ENCODE measurements at regions of chr1 and their contacts with region 1.

Region 1: DNA sequence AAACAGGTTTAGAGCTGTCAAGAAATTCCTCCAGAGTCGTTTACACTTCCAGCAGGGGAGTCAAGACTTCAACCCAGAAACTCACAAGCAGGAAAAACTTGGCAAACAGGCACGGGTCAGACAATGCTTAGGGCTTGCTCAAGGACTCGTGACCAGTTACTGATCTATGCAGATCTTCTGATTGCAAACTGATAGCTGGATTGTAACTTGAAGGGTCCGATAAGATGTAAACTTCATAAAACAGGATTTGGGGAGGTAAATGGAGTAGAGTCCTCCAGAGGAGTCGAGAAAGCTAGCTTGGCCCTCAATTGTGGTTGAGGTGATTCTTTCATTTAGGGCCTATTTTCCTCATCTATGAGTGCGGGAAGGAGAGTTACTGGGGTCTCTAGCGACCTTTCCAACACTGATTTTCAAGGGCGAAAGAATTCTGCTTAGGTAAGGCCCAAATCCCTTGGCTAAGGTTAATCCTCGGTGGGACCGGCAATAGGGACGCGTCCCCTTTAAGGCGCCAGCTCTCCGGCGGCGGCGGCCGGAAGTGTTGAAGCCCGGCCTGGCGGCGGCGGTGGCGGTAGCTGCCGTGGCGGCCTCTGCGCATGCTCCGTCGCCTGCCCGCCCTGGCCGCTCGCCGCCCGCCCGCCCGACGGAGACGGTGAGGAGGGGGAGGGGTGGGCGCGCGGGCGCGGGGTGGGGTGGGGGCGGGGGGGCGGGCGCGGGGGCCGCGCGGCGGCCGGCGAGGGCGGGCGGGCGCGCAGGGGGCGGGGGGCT is at the start of gene GMEB1:
- DNase-seq: peak; percentile 89
- H3K4me3 Mint-ChIP-seq: peak within 1 kb of the TSS; percentile 92
- H3K27ac Mint-ChIP-seq: peak within 1 kb of the TSS; percentile 97
- H3K4me1 Mint-ChIP-seq: peaks cover 20% of the 10 kb centered on the region
- H3K27me3 Mint-ChIP-seq: no peaks in the 10 kb centered on the region
- total RNA-seq, gene GMEB1: 27.7 to 28.7 TPM

Region 2: DNA sequence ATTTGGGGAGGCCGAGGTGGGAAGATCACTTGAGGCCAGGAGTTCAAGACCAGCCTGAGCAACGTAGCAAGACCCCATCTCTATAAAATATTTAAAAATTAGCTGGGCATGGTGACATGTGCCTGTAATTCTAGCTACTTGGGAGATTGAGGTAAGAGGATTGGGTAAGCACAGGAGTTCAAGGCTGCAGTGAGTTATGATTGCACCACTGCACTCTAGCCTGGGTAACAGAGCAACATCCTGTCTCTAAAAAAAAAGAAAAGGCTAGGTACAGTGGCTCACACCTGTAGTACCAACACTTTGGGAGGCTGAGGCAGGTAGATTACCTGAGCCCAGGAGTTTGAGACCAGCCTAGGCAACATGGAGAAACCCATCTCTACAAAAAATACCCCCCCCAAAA is 198.2 kb before region 1 on chr1:
- CTCF ChIA-PET with region 1: no interaction called
- POLR2A ChIA-PET with region 1: no interaction called
- DNase-seq: no peak
- H3K4me3 Mint-ChIP-seq: no peak overlapping the region
- H3K27ac Mint-ChIP-seq: no peak overlapping the region
- H3K4me1 Mint-ChIP-seq: peaks cover 10% of the 10 kb centered on the region
- H3K27me3 Mint-ChIP-seq: no peaks in the 10 kb centered on the region

Region 3: DNA sequence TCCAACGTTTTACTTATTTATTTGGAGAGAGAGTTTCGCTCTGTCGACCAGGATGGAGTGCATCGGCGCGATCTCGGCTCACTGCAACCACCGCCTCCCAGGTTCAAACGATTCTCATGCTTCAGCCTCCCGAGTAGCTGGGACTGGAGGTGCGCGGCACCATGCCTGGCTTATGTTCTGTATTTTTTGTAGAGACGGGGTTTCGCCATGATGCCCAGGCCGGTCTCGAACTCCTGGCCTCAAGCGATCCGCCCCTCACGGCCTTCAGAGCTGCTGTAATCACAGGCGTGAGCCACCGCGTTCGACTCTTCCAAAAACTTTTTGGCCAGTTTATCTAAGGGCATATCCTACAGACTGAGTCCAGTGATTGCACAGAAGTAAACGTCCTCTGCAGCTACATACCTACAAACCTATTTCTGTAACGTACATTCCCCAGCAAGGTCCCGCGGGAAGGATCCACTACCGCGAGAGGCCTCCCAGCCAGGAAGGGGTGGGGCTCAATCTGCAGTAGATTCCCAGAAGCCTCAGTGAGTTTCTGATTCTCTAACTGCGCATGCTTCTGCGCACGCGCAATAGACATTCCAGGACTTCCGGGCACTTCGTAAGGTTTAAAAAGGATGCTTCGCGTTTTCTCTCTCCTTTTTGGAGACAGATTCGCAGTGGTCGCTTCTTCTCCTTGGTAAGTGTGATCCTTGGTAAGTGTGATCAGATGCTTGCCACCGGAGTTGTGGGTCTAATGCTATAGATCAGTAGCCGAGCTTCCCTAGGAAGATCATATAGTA is 162.8 kb before region 1 on chr1 and contains the start of gene RCC1:
- CTCF ChIA-PET with region 1: no interaction called
- POLR2A ChIA-PET with region 1: interaction called, 29 read pairs
- DNase-seq: peak; percentile 97
- H3K4me3 Mint-ChIP-seq: peak within 1 kb of the TSS; percentile 98
- H3K27ac Mint-ChIP-seq: peak within 1 kb of the TSS; percentile 97
- H3K4me1 Mint-ChIP-seq: peaks cover 42% of the 10 kb centered on the region
- H3K27me3 Mint-ChIP-seq: no peaks in the 10 kb centered on the region
- total RNA-seq, gene RCC1: 47.6 to 50.7 TPM

Region 4: GRCh38 chr1:28642847-28643635 is 25.3 kb before region 1 on chr1 and contains the start of gene TAF12:
- CTCF ChIA-PET with region 1: interaction called, 19 read pairs
- POLR2A ChIA-PET with region 1: interaction called, 441 read pairs
- DNase-seq: peak; percentile 95
- H3K4me3 Mint-ChIP-seq: peak within 1 kb of the TSS; percentile 96
- H3K27ac Mint-ChIP-seq: peak within 1 kb of the TSS; percentile 96
- H3K4me1 Mint-ChIP-seq: peaks cover 54% of the 10 kb centered on the region
- H3K27me3 Mint-ChIP-seq: no peaks in the 10 kb centered on the region
- total RNA-seq, gene TAF12: 33.8 to 34.0 TPM

Region 5: DNA sequence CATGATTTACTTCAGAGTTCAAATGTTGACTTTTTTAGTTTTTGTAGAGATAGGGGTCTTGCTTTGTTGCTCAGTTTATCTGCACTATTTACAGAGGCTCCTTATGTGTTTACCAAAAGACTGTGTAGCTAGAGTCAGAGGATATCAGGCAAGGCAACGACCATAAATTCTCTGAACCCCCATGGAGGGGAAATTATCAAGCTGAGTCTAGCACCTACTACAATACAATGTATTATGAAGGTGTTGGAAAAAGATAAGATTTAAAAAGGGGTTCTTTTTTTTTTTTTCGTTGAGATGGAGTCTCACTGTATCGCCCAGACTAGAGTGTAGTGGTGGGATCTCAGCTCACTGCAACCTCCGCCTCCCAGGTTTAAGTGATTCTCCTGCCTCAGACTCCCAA is 16.6 kb after region 1 on chr1:
- CTCF ChIA-PET with region 1: no interaction called
- POLR2A ChIA-PET with region 1: interaction called, 10 read pairs
- DNase-seq: no peak
- H3K4me3 Mint-ChIP-seq: no peak overlapping the region
- H3K27ac Mint-ChIP-seq: no peak overlapping the region
- H3K4me1 Mint-ChIP-seq: peaks cover 4% of the 10 kb centered on the region
- H3K27me3 Mint-ChIP-seq: no peaks in the 10 kb centered on the region

Region 6: DNA sequence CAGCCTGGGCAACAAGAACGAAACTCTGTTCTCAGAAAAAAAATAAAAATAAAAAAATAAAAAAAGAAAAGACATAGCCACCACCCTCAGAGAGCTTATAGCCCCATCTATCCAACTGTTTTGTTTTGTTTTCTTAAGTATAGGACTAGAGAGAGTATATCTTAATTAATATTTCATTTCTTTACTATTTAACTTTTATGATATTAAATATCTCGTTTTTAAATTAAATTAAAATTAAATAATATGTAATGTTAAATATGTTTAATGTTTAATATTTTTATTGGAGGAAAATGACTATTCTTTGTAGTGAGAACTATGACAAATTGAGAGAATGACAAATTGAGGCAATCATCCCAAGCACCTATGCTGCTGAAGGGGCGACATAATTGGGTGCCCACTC is 35.3 kb after region 1 on chr1:
- CTCF ChIA-PET with region 1: no interaction called
- POLR2A ChIA-PET with region 1: interaction called, 17 read pairs
- DNase-seq: no peak
- H3K4me3 Mint-ChIP-seq: no peak overlapping the region
- H3K27ac Mint-ChIP-seq: no peak overlapping the region
- H3K4me1 Mint-ChIP-seq: peaks cover 11% of the 10 kb centered on the region
- H3K27me3 Mint-ChIP-seq: no peaks in the 10 kb centered on the region

Region 7: DNA sequence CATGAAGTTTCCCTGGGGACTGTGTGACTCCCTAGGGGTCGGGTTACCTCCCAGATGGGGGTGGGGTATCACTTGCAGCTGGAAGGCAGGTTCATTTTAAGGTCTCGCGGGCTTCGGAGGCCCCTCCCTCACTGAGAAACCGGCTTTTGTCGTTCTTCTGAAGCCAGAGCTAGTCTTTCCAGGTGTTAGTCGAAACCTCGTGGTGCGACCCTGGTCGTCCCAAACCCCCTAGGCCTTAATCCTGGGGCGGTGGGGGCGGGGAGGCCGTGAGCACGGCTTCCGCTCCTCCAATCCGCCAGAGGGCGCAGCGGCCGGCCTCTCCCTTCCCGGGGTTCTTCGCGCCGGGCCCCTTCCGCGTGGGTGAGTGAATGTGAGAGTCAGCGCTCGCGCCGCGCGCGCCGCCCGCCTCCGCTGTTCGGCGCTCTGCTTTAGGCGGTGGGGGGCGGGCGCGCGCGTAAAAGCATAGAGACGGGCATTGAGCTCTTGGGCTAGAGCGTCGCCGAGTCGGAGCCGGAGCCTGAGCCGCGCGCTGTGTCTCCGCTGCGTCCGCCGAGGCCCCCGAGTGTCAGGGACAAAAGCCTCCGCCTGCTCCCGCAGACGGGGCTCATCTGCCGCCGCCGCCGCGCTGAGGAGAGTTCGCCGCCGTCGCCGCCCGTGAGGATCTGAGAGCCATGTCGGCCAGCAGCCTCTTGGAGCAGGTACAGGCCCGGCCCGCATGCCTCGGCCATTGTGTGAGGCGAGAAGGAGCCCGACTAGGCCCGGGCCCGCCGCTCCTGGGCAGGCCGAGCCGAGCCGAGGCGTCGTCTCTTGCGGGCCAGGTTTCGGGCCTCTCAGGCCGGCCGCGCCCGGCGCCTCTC is 68.3 kb after region 1 on chr1 and contains the start of gene YTHDF2:
- CTCF ChIA-PET with region 1: interaction called, 52 read pairs
- POLR2A ChIA-PET with region 1: interaction called, 101 read pairs
- DNase-seq: peak; percentile 98
- H3K4me3 Mint-ChIP-seq: peak within 1 kb of the TSS; percentile 97
- H3K27ac Mint-ChIP-seq: peak within 1 kb of the TSS; percentile 94
- H3K4me1 Mint-ChIP-seq: peaks cover 38% of the 10 kb centered on the region
- H3K27me3 Mint-ChIP-seq: no peaks in the 10 kb centered on the region
- total RNA-seq, gene YTHDF2: 69.9 to 70.9 TPM

Region 8: DNA sequence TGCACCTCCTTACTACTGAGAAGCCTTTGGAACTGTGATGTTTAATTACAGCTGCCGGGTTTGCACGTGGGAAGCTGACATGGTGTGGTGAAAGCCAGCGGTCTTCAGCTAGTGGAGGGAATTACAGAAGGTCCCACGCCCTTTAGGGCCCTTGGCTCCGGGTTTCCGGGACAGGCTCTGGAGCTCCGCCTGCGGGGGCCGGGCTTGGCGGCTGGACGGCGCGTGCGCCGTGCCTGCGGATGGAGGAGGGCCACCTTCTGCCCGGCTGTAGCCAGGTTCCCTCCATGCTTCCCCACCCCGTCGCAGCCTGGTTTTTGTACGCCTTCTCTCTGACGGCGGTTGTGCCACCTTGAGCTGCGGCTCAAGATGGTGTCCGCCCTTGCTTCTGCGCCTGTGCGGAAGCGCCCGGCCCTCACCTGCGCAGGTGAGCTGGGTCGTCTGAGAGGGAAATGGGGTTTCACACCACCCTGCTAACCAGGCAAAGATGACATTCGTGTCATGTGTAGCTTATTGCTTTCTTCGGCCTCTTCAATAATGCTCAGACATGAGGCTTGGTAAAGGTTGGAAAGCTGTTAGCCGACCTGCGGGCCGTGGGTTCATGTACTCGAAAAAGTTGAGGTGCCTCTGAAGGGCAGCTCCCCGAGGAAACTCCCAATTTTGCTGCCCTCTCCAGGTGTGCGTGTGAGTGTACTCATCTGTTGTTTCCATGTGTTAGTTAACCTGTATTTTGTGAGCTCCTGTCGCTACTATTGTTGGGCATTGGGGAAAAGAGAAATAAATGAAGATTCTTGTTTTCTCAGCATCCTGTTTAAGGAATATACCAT is 107.0 kb after region 1 on chr1:
- CTCF ChIA-PET with region 1: interaction called, 3 read pairs
- POLR2A ChIA-PET with region 1: interaction called, 13 read pairs
- DNase-seq: peak; percentile 71
- H3K4me3 Mint-ChIP-seq: peak overlapping the region; percentile 66
- H3K27ac Mint-ChIP-seq: no peak overlapping the region
- H3K4me1 Mint-ChIP-seq: peaks cover 10% of the 10 kb centered on the region
- H3K27me3 Mint-ChIP-seq: peaks cover 6% of the 10 kb centered on the region

Region 9: DNA sequence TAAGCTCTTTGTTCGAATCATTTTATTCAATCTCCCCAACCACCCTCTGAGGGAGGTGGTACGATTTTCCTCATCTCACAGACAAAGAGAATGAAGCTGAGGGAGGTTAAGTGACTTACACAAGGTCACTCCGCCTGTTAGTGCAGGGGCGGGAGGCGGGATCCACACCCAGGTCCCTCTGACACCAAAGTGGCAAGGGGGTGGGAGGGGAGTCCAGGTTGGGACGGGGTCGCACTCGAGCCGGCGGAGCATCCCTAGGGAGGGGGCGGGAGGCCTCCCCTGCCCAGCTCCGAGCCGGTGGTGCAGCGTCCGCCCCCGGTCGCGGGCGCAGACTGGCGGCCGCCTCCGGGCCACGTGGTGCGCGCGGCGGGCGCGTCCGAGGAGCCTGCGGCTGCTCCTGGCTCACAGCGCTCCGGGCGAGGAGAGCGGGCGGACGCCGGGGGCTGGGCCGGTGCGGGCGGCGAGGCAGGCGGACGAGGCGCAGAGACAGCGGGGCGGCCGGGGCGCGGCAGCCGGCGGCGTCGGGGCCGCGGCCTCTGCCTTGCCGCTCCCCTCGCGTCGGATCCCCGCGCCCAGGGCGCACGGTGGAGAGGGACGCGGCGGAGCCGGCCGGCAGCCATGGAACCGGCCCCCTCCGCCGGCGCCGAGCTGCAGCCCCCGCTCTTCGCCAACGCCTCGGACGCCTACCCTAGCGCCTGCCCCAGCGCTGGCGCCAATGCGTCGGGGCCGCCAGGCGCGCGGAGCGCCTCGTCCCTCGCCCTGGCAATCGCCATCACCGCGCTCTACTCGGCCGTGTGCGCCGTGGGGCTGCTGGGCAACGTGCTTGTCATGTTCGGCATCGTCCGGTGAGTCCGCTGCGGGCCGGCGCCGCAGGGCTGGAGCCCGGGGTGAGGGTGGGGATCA is 143.6 kb after region 1 on chr1 and contains the start of gene OPRD1:
- CTCF ChIA-PET with region 1: no interaction called
- POLR2A ChIA-PET with region 1: no interaction called
- DNase-seq: no peak
- H3K4me3 Mint-ChIP-seq: no peak within 1 kb of the TSS
- H3K27ac Mint-ChIP-seq: no peak within 1 kb of the TSS
- H3K4me1 Mint-ChIP-seq: peaks cover 4% of the 10 kb centered on the region
- H3K27me3 Mint-ChIP-seq: peaks cover 55% of the 10 kb centered on the region
- total RNA-seq, gene OPRD1: not detected

Measured in activated CD4-positive, alpha-beta memory T cell treated with anti-CD3 and anti-CD28 coated beads, Interleukin-2, amount 10 ng/mL, durations not matched to agents 7 days and 5 days (primary cell).